Mucosa of descending colon (tissue), 3 donors: ENCODE measurements at regions of chr1 and their contacts with region 1.

Region 1: DNA sequence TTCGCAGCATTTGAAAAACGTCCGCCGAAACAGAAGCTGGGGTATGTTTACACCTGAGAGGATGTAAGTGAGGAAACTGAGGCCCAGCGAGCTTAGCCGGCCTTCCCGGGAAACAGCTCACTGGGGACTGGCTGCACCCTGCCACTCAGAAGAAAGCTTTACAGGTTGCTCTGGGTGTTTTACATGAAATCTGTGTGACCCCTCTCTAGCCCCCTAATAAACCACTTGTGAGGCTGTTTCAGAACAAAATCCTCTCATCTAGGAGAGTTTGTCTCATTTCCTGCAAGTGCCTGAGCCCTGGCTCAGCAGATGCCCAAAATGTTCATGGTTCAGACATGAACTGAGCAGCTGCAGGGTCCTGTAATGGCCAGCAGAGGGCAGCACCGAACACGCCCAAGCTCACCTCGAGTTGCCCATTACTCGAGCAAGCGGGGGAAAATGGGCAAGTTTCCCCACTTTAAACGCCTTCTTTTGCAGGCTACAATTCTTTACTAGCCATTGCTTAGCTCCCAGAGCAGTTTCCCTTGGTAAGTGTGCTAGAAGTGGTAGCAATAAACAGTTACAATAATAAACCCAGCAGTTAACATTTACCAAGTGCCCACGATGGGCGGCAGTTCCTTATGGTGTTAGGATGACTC is 76.4 kb downstream of the FHAD1 start:
- DNase-seq: peak; percentile 74 to 91 (median 79)
- ATAC-seq: peak; percentile 94
- H3K4me3 ChIP-seq: no peak overlapping the region
- H3K4me1 ChIP-seq: peaks cover 13% of the 10 kb centered on the region
- CTCF ChIP-seq: peak; percentile 95

Region 2: DNA sequence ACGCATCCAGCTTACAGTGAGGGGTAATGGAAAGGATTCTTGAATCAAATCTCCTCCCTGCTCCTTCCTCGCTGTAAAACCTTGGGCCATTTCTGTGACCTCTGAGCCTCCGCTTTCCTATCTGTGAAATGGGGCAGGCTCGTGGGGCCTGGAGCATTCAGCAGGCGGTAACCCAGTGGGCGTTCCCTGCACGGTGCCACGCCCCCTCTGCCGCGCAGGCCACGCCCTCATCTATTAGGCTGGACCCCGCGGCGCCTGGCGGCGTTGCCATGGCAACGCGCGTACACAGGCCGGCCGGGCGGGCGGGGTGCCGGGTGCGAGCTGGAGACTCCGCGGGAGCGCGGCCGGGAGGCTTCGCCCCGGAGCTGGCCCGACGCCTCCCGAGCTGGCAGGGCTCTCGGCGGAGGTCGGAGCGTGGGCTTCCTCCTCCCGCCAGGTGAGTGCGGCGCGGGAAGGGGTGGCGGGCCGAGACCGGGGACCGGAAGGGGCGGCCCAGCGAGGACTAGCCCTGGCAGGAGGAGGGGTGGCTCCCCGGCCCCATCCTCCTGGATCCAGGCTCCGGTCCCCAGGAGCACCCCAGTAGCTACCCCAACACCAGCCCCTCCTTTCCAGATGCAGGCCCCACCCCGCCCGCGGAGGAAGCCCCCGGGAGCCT is 76.4 kb before region 1 on chr1 and contains the start of gene FHAD1:
- intact Hi-C with region 1: no loop called
- DNase-seq: peak; percentile 77 to 80 (median 79)
- ATAC-seq: peak; percentile 96
- H3K4me3 ChIP-seq: peak within 1 kb of the TSS; percentile 9
- H3K4me1 ChIP-seq: peaks cover 7% of the 10 kb centered on the region
- CTCF ChIP-seq: no peak
- total RNA-seq, gene FHAD1: 0.89 to 1.9 (median 0.99) TPM

Region 3: GRCh38 chr1:15409388-15410222 is 86.1 kb after region 1 on chr1 and contains the start of gene EFHD2:
- intact Hi-C with region 1: loop called in 1 of 2 experiments (anchors 5 kb)
- DNase-seq: peak; percentile 92
- ATAC-seq: peak; percentile 81
- H3K4me3 ChIP-seq: peak within 1 kb of the TSS; percentile 46
- H3K4me1 ChIP-seq: peaks cover 38% of the 10 kb centered on the region
- CTCF ChIP-seq: no peak
- total RNA-seq, gene EFHD2: 89.5 to 197 (median 154) TPM

Region 4: DNA sequence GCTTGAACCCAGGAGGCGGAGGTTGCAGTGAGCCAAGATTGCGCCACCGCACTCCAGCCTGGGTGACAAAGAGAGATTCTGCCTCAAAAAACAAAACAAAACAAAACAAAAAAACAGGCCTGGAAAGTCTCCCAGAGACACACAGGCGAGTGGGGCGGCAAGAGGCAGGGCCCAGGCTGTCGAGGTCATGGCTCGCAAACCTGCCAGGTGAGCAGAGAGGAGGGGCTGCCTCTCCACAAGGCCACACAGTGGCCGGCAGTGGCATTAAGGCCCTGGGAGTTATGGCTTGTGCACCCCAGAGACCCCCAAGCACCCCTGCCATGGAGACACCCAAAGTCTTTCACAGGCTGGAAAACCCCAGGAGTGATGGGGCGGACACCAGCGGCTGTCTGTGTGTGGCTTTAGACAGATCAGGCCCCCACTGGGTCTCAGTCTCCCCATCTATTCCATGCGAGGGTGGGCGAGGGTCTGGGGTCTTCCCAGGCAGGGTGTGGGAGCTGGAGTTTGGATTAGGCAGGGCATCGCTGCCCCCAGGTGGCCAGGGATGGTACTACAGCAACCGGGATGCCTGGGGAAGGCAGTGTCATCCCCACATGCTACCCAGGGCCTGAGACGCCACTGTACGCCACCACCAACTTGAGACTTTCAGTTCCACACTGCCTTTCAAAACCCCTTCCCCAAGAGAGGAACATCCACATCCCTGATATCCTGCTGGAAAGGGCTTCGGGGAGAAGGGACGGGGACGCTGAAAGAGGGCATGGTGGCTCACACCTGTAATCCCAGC is 107.5 kb after region 1 on chr1:
- intact Hi-C with region 1: loop called (anchors 5 kb)
- DNase-seq: peak in 2 of 3 donors; percentile 89
- ATAC-seq: peak; percentile 53
- H3K4me3 ChIP-seq: no peak overlapping the region
- H3K4me1 ChIP-seq: peaks cover 20% of the 10 kb centered on the region
- CTCF ChIP-seq: peak; percentile 93